B cell (primary cell): ENCODE measurements at regions of chr20 and their contacts with region 1.

Region 1: GRCh38 chr20:45987108-45987780 is 15.2 kb upstream of the ZNF335 start:
- DNase-seq: peak; percentile 82
- ATAC-seq: peak; percentile 98
- H3K4me3 ChIP-seq: no peak overlapping the region
- H3K4me3 Mint-ChIP-seq: no peak overlapping the region
- H3K27ac ChIP-seq: no peak overlapping the region
- H3K27ac Mint-ChIP-seq: no peak overlapping the region
- H3K4me1 ChIP-seq: peaks cover 4 to 12% of the 10 kb centered on the region in 2 donors
- H3K4me1 Mint-ChIP-seq: peaks cover 6% of the 10 kb centered on the region
- H3K27me3 ChIP-seq: peaks cover 0 to 27% (median 10%) of the 10 kb centered on the region in 4 experiments
- H3K27me3 Mint-ChIP-seq: peaks cover 20% of the 10 kb centered on the region
- CTCF ChIP-seq: peak; percentile 93

Region 2: GRCh38 chr20:45998761-45999160 is 11.5 kb after region 1 on chr20:
- CTCF ChIA-PET with region 1: interaction called, 11 read pairs
- POLR2A ChIA-PET with region 1: no interaction called
- intact Hi-C with region 1: no loop called
- DNase-seq: peak; percentile 64
- ATAC-seq: peak; percentile 65
- H3K4me3 ChIP-seq: no peak overlapping the region
- H3K4me3 Mint-ChIP-seq: no peak overlapping the region
- H3K27ac ChIP-seq: no peak overlapping the region
- H3K27ac Mint-ChIP-seq: no peak overlapping the region
- H3K4me1 ChIP-seq: peaks cover 30 to 37% of the 10 kb centered on the region in 2 donors
- H3K4me1 Mint-ChIP-seq: peaks cover 35% of the 10 kb centered on the region
- H3K27me3 ChIP-seq: peaks cover 0 to 21% (median 0%) of the 10 kb centered on the region in 4 experiments
- H3K27me3 Mint-ChIP-seq: peaks cover 10% of the 10 kb centered on the region
- CTCF ChIP-seq: no peak

Region 3: GRCh38 chr20:46004889-46005473 is 17.7 kb after region 1 on chr20:
- CTCF ChIA-PET with region 1: interaction called, 16 read pairs
- POLR2A ChIA-PET with region 1: no interaction called
- intact Hi-C with region 1: no loop called
- DNase-seq: peak; percentile 70
- ATAC-seq: peak; percentile 53
- H3K4me3 ChIP-seq: peak overlapping the region in 3 of 5 experiments; percentile 21 to 25 (median 24)
- H3K4me3 Mint-ChIP-seq: peak overlapping the region; percentile 79
- H3K27ac ChIP-seq: no peak overlapping the region
- H3K27ac Mint-ChIP-seq: peak overlapping the region; percentile 75
- H3K4me1 ChIP-seq: peaks cover 76 to 77% of the 10 kb centered on the region in 2 donors
- H3K4me1 Mint-ChIP-seq: peaks cover 66% of the 10 kb centered on the region
- H3K27me3 ChIP-seq: peaks cover 0 to 18% (median 7%) of the 10 kb centered on the region in 4 experiments
- H3K27me3 Mint-ChIP-seq: peaks cover 19% of the 10 kb centered on the region
- CTCF ChIP-seq: no peak

Region 4: GRCh38 chr20:46013826-46014516 is 26.7 kb after region 1 on chr20:
- CTCF ChIA-PET with region 1: interaction called, 84 read pairs
- POLR2A ChIA-PET with region 1: interaction called, 3 read pairs
- intact Hi-C with region 1: loop called (anchors 1 kb)
- DNase-seq: peak; percentile 87
- ATAC-seq: peak; percentile 88
- H3K4me3 ChIP-seq: peak overlapping the region in 4 of 5 experiments; percentile 19 to 47 (median 35)
- H3K4me3 Mint-ChIP-seq: peak overlapping the region; percentile 72
- H3K27ac ChIP-seq: no peak overlapping the region
- H3K27ac Mint-ChIP-seq: peak overlapping the region; percentile 63
- H3K4me1 ChIP-seq: peaks cover 48 to 49% of the 10 kb centered on the region in 2 donors
- H3K4me1 Mint-ChIP-seq: peaks cover 49% of the 10 kb centered on the region
- H3K27me3 ChIP-seq: peaks cover 0 to 57% (median 29%) of the 10 kb centered on the region in 4 experiments
- H3K27me3 Mint-ChIP-seq: peaks cover 59% of the 10 kb centered on the region
- CTCF ChIP-seq: peak; percentile 89